Dorsolateral prefrontal cortex (tissue), 120 donors: ENCODE measurements at regions of chr20 and their contacts with region 1.

Region 1: DNA sequence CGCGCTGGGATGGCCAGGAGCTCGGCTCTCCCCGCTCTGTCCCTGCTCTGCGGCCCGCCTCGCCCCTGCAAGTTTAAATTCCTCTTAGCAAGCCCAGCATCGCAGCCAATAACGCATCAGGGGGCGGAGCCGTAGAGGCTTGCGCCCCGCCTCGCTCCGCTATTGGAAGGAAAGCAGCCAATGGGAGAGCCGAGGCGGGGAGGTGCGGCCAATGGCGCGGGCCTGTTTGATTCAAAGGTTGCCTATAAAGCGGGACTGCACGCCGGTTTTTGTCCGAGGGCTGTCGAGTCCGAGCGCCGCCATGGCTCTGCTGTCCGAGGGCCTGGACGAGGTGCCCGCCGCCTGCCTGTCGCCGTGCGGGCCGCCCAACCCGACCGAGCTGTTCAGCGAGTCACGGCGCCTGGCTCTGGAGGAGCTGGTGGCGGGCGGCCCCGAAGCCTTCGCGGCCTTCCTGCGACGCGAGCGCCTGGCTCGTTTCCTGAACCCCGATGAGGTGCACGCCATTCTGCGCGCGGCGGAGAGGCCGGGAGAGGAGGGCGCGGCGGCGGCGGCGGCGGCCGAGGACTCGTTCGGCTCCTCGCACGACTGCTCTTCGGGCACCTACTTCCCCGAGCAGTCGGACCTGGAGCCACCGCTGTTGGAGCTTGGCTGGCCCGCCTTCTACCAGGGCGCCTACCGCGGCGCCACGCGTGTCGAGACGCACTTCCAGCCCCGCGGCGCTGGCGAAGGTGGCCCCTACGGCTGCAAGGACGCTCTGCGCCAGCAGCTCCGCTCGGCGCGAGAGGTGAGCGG is at the start of gene FAM83D:
- DNase-seq: peak; percentile 89 to 98 (median 96)
- H3K4me3 ChIP-seq: peak within 1 kb of the TSS; percentile 47 to 82 (median 70)
- H3K27ac ChIP-seq: peak within 1 kb of the TSS in 40 of 59 donors; percentile 6 to 75 (median 52)
- H3K27me3 ChIP-seq: no peaks in the 10 kb centered on the region
- CTCF ChIP-seq: peak in 31 of 56 donors; percentile 2 to 98 (median 47)
- total RNA-seq, gene FAM83D: 0.95 to 5.1 (median 2.4) TPM

Region 2: GRCh38 chr20:38962044-38962927 is 35.9 kb after region 1 on chr20 and contains the start of gene DHX35:
- intact Hi-C with region 1: loop called (anchors 1 to 5 kb)
- DNase-seq: peak; percentile 96 to 99 (median 98)
- H3K4me3 ChIP-seq: peak within 1 kb of the TSS; percentile 65 to 100 (median 95)
- H3K27ac ChIP-seq: peak within 1 kb of the TSS; percentile 55 to 95 (median 89)
- H3K27me3 ChIP-seq: no peaks in the 10 kb centered on the region
- CTCF ChIP-seq: peak in 45 of 56 donors; percentile 5 to 57 (median 30)
- total RNA-seq, gene DHX35: 7.4 to 19.8 (median 13.7) TPM

Region 3: GRCh38 chr20:39019805-39020325 is 93.5 kb after region 1 on chr20:
- intact Hi-C with region 1: no loop called
- DNase-seq: no peak
- H3K4me3 ChIP-seq: no peak overlapping the region
- H3K27ac ChIP-seq: no peak overlapping the region
- H3K27me3 ChIP-seq: no peaks in the 10 kb centered on the region
- CTCF ChIP-seq: no peak

Region 4: DNA sequence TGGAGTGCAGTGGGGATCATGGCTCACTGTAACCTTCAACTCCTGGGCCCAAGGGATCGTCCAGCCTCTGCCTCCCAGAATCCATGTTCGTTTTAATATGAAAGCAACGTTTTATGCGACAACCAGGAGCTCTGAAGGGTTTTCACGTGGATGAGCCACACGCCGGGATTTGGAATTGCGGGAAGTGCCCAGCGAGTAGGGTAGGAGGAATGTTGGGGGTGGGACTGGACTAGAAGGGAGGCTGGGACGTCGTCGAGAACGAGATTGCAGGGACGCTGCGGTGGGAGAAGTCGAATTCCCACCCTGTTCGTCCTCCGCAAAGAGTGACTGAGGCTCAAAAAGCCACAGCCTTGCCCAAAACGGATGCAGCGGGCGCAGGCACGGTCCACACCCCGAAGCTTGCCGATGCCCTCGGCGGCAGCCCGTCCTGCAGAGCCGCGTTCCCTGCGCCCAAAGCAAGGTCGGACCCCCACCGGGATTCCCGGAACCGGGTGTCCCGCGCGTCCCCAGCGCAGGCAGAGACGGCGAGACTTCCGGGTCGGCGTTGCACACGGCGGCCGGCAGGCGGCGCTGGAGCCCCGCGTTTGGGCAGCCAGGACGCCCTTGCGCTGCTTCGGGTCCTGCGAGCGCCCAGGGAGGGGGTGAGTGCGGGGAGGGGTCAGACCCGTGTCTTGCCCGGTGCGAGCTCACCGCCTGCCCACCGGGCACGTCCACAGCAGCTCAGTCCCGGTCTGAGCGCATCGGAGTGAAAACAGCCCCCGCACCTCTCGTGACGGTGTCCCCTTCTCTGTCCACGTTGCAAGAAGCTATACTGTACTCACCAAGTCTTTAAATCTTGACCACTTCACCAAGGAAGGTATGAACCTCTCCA is 123.6 kb after region 1 on chr20:
- intact Hi-C with region 1: loop called (anchors 1 to 10 kb)
- DNase-seq: peak; percentile 58 to 89 (median 72)
- H3K4me3 ChIP-seq: peak overlapping the region; percentile 39 to 91 (median 72)
- H3K27ac ChIP-seq: peak overlapping the region in 54 of 59 donors; percentile 6 to 91 (median 74)
- H3K27me3 ChIP-seq: no peaks in the 10 kb centered on the region
- CTCF ChIP-seq: peak; percentile 73 to 100 (median 98)

Region 5: GRCh38 chr20:39188266-39188765 is 262.0 kb after region 1 on chr20:
- intact Hi-C with region 1: no loop called
- DNase-seq: no peak
- H3K4me3 ChIP-seq: no peak overlapping the region
- H3K27ac ChIP-seq: no peak overlapping the region
- H3K27me3 ChIP-seq: peaks cover 0 to 3% (median 0%) of the 10 kb centered on the region in 45 donors
- CTCF ChIP-seq: no peak